PC-9 (cell line): ENCODE measurements at regions of chr6 and their contacts with region 1.

Region 1: GRCh38 chr6:137866914-137867684 is at the start of gene TNFAIP3:
- DNase-seq: peak; percentile 85 to 91
- H3K4me3 ChIP-seq: peak within 1 kb of the TSS; percentile 76
- H3K27ac ChIP-seq: peak within 1 kb of the TSS; percentile 80
- H3K4me1 ChIP-seq: peaks cover 59% of the 10 kb centered on the region
- H3K27me3 ChIP-seq: no peaks in the 10 kb centered on the region
- CTCF ChIP-seq: peak; percentile 69
- total RNA-seq, gene TNFAIP3: 7.2 and 7.8 TPM in 2 replicates

Region 2: DNA sequence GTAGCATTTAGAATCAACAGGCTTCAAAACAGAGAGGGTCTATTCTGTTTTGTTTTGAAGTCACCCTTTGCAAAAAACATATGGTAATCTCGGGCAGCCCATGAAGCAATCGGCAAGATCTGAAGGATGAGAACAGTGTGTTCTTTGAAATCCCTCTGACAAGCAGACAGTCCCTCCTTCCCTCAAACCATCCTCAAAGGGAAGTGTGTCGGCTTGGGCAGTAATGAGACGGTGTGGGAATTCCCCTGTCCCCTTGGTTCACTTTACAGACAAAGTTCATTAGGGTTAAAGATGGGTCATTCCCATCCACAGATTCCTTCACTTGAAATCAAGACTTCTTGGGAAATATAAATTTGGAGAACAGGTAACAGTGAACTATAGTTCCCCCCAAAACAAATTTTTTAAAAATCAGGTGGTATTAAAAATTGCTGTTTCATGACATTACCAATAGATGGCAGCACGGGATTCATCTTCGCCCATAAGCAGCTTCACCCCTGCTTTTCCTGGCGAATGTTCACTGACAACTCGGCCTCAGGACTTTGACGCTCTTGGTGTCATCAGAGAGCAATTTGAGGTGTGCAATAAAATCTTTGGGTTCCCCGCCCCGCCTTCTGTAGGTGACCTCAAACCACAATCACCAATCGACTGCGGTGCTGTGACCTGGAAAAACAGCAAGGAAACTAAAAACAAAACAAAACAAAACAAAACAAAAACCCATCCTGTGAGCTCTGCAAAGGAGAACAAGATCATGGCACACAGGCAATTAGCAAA is 159.3 kb before region 1 on chr6:
- CTCF ChIA-PET with region 1: interaction called, 5 read pairs
- POLR2A ChIA-PET with region 1: interaction called, 4 read pairs
- intact Hi-C with region 1: loop called (anchors 1 kb)
- DNase-seq: peak; percentile 56 to 94
- H3K4me3 ChIP-seq: peak overlapping the region; percentile 6; the same call in 1 of the 2 replicates
- H3K27ac ChIP-seq: peak overlapping the region; percentile 89
- H3K4me1 ChIP-seq: peaks cover 33% of the 10 kb centered on the region
- H3K27me3 ChIP-seq: no peaks in the 10 kb centered on the region
- CTCF ChIP-seq: peak; percentile 95

Region 3: GRCh38 chr6:137799950-137800568 is 67.0 kb before region 1 on chr6:
- CTCF ChIA-PET with region 1: no interaction called
- POLR2A ChIA-PET with region 1: no interaction called
- intact Hi-C with region 1: loop called (anchors 1 kb)
- DNase-seq: peak in 1 of 2 experiments; percentile 14
- H3K4me3 ChIP-seq: no peak overlapping the region
- H3K27ac ChIP-seq: no peak overlapping the region
- H3K4me1 ChIP-seq: no peaks in the 10 kb centered on the region
- H3K27me3 ChIP-seq: no peaks in the 10 kb centered on the region
- CTCF ChIP-seq: peak; percentile 83

Region 4: GRCh38 chr6:137827977-137828810 is 38.9 kb before region 1 on chr6:
- CTCF ChIA-PET with region 1: interaction called, 4 read pairs
- POLR2A ChIA-PET with region 1: no interaction called
- intact Hi-C with region 1: loop called (anchors 2 kb)
- DNase-seq: no peak
- H3K4me3 ChIP-seq: no peak overlapping the region
- H3K27ac ChIP-seq: peak overlapping the region; percentile 79
- H3K4me1 ChIP-seq: peaks cover 50% of the 10 kb centered on the region
- H3K27me3 ChIP-seq: no peaks in the 10 kb centered on the region
- CTCF ChIP-seq: no peak

Region 5: GRCh38 chr6:137933696-137934095 is 66.6 kb after region 1 on chr6:
- CTCF ChIA-PET with region 1: no interaction called
- POLR2A ChIA-PET with region 1: no interaction called
- intact Hi-C with region 1: no loop called
- DNase-seq: peak; percentile 27 to 86
- H3K4me3 ChIP-seq: no peak overlapping the region
- H3K27ac ChIP-seq: peak overlapping the region; percentile 74
- H3K4me1 ChIP-seq: peaks cover 15% of the 10 kb centered on the region
- H3K27me3 ChIP-seq: no peaks in the 10 kb centered on the region
- CTCF ChIP-seq: no peak

Region 6: DNA sequence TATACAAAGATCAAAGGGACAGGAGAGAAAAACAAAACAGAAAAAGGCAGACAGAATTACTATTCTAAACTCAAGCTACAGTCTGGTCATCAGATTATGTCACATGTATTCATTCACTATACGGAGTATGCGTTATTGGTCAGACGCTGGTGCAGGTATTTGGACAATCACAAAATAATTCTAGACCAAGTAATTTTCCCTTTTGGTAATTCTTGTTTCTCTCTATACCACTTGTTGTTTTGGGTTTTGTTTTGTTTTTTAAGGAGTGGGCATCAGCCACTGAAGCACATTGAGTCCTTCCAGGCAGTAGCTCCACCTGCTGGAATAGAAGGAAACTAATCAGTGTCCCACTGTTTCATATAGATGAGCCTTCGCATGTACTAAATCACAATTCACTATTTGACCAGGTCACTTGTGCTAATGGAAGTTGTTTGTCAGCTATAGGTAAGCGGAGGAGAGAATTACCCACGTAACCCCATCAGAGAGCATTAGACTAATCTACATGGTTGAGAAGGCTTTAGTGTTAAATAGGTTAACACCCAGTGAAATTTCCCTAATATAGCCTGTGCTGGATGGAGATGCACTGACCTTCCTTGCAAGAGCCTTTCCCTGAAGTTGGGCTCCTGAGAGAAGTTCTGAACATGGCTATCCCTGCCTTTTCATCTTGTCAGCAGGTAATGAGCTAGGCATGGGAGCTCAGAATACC is 77.8 kb after region 1 on chr6:
- CTCF ChIA-PET with region 1: no interaction called
- POLR2A ChIA-PET with region 1: interaction called, 11 read pairs
- intact Hi-C with region 1: loop called (anchors 2 kb)
- DNase-seq: no peak
- H3K4me3 ChIP-seq: no peak overlapping the region
- H3K27ac ChIP-seq: no peak overlapping the region
- H3K4me1 ChIP-seq: peaks cover 2% of the 10 kb centered on the region; the same call in 1 of the 2 replicates
- H3K27me3 ChIP-seq: no peaks in the 10 kb centered on the region
- CTCF ChIP-seq: peak; percentile 90